Left ventricle myocardium inferior (tissue), 1 donor: ENCODE measurements at regions of chr1 and their contacts with region 1.

Region 1: DNA sequence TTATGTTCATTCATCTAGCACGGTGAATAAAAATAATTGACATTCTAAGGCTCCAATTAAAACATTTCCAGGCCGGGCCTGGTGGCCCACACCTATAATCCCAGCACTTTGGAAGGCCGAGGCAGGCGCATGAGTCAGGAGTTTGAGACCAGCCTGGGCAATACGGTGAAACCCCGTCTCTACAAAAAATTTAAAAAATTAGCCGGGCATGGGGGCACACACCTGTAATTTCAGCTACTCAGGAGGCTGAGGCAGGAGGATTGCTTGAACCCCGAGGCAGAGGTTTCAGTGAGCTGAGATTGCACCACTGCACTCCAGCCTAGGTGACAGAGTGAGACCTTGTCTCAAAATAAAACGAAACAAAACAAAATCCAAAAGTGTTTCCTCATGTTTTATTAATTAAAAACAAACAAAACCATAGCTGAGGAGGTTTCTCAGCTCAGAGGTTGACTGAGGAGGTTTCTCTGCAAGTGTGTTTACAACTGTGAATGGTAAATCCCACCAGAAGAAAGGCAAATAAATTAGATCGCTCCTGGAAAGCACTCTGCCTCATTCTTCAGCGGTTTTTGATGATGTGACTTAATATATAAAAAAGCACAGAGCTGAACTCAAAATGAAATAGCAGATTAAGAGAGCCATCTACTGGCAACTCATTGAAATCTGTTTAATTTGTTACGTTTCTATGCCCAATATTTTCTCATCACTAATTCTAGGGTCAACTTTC is 37.7 kb upstream of the ATG4C start:
- DNase-seq: no peak
- H3K4me3 ChIP-seq: no peak overlapping the region
- H3K27ac ChIP-seq: no peak overlapping the region
- H3K4me1 ChIP-seq: peaks cover 18% of the 10 kb centered on the region
- H3K27me3 ChIP-seq: no peaks in the 10 kb centered on the region
- CTCF ChIP-seq: peak; percentile 73

Region 2: GRCh38 chr1:62508187-62508758 is 238.0 kb before region 1 on chr1:
- intact Hi-C with region 1: loop called (anchors 2 kb)
- DNase-seq: no peak
- H3K4me3 ChIP-seq: no peak overlapping the region
- H3K27ac ChIP-seq: no peak overlapping the region
- H3K4me1 ChIP-seq: no peaks in the 10 kb centered on the region
- H3K27me3 ChIP-seq: no peaks in the 10 kb centered on the region
- CTCF ChIP-seq: peak; percentile 72